AG04450 (cell line): ENCODE measurements at regions of chr18 and their contacts with region 1.

Region 1: GRCh38 chr18:41954827-41955613 is at the start of gene PIK3C3:
- DNase-seq: peak; percentile 96
- H3K4me3 ChIP-seq: peak within 1 kb of the TSS; percentile 90
- H3K27ac ChIP-seq: peak within 1 kb of the TSS; percentile 82
- H3K27me3 ChIP-seq: no peaks in the 10 kb centered on the region
- CTCF ChIP-seq: no peak
- polyA plus RNA-seq, gene PIK3C3: 58.5 and 77.5 TPM in 2 replicates

Region 2: DNA sequence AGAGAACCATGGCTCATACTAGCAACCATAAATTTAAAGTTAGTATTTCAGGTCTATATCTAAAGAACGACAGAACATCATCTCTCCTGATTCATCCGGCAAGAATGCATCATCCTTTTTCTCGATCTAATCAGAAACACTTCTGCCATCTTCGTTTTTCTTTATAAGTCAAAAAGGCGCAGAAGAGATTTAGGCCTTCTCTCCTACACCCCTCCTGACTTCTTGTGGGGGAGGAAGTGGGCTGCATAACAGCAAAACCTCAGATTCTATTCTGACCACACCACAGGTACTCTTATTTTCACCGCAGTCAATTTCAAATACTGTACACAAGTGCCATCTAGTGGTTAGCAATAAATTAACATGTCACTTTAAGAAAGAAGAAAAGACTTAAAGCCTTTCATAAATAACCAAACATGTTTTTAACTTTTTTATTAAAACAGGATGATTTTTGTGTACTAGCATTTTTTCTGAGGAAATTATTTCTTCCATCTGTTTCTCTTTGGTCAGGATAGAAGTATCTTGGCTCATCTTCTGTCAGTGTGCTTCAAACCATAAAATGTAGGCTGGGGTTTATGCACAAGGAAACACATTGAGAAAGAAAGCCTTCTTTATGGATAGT is 48.4 kb before region 1 on chr18:
- CTCF ChIA-PET with region 1: no interaction called
- POLR2A ChIA-PET with region 1: no interaction called
- DNase-seq: peak; percentile 39
- H3K4me3 ChIP-seq: peak overlapping the region; percentile 38
- H3K27ac ChIP-seq: no peak overlapping the region
- H3K27me3 ChIP-seq: no peaks in the 10 kb centered on the region
- CTCF ChIP-seq: peak; percentile 60

Region 3: GRCh38 chr18:41938445-41938844 is 16.6 kb before region 1 on chr18:
- CTCF ChIA-PET with region 1: interaction called, 4 read pairs
- POLR2A ChIA-PET with region 1: interaction called, 13 read pairs
- DNase-seq: peak; percentile 86
- H3K4me3 ChIP-seq: no peak overlapping the region
- H3K27ac ChIP-seq: peak overlapping the region; percentile 90
- H3K27me3 ChIP-seq: no peaks in the 10 kb centered on the region
- CTCF ChIP-seq: peak; percentile 51